ENCODE measurements at regions of chr1 and their contacts with region 1.

Region 1: DNA sequence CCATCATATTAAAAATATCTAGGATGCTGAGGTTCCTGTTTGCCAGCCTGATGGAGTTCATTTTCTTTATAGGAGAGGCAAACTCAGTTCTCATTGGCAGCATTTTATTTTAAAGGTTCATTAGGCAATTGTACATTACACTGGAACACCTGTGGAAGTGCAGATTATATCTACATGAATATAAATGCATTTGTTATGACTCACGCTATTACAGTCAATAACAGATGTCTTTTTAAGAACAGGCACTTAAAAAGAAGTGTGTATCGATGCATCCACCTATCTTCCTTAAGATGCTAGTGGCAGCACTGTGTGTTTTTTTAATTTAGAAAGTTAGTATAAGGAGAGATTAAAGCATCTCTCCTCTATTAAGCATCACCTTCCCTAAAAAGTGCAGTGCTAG is 276.5 kb downstream of the PRDM2 start:
- DNase-seq: no peak
- H3K4me3 ChIP-seq: no peak overlapping the region
- H3K27ac ChIP-seq: no peak overlapping the region
- H3K4me1 ChIP-seq: no peaks in the 10 kb centered on the region
- H3K27me3 ChIP-seq: no peaks in the 10 kb centered on the region
- CTCF ChIP-seq: no peak
- POLR2A ChIP-seq: no peak

Region 2: DNA sequence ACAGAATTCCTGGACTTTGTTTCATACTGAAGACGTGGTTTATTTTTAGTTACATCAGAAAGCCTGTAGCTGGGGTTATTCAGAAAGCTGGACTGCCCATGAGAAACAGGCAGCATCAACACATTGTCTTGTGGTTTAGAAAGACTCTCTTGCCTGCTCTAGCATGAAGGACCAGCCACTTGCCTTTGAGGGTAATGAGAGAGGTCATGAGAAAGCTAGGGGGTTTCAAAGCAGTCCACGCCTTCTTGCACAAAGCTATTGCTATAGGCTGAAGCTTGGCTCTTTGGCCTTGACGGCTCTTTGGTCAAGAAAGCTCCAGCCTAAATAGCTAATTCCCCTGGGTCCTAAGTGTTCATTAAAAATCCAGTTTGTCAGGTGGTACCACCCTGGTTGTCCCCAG is 68.4 kb before region 1 on chr1:
- intact Hi-C with region 1: no loop called
- DNase-seq: no peak
- H3K4me3 ChIP-seq: no peak overlapping the region
- H3K27ac ChIP-seq: no peak overlapping the region
- H3K4me1 ChIP-seq: no peaks in the 10 kb centered on the region
- H3K27me3 ChIP-seq: no peaks in the 10 kb centered on the region
- CTCF ChIP-seq: no peak
- POLR2A ChIP-seq: no peak

Region 3: DNA sequence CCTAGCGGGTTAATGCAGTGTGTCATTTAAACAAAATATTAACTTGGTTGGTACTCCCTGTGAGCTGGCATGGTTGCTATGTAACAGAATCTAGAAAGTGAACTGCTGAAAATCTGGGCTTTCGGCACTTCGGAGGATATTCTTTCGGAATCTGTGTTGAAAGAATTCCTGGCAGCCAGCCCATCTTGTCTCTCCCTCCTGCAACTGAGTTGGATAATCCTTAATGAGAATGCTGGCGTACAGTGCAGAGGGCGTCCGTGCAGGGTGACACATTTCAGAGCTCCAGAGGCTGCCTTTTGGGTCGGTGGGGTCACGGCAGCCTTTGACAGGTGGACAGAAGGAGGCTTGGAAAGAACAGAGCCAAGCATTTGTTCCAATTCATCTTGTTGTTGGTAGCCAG is 625.7 kb after region 1 on chr1:
- intact Hi-C with region 1: loop called (anchors 5 kb)
- DNase-seq: no peak
- H3K4me3 ChIP-seq: no peak overlapping the region
- H3K27ac ChIP-seq: peak overlapping the region; percentile 40
- H3K4me1 ChIP-seq: peaks cover 32% of the 10 kb centered on the region
- H3K27me3 ChIP-seq: no peaks in the 10 kb centered on the region
- CTCF ChIP-seq: no peak
- POLR2A ChIP-seq: no peak

Measured in vagina (tissue), 2 donors.